Activated CD4-positive, alpha-beta T cell treated with anti-CD3 and anti-CD28 coated beads for 36 hours (primary cell): ENCODE measurements at regions of chr19 and their contacts with region 1.

Region 1: DNA sequence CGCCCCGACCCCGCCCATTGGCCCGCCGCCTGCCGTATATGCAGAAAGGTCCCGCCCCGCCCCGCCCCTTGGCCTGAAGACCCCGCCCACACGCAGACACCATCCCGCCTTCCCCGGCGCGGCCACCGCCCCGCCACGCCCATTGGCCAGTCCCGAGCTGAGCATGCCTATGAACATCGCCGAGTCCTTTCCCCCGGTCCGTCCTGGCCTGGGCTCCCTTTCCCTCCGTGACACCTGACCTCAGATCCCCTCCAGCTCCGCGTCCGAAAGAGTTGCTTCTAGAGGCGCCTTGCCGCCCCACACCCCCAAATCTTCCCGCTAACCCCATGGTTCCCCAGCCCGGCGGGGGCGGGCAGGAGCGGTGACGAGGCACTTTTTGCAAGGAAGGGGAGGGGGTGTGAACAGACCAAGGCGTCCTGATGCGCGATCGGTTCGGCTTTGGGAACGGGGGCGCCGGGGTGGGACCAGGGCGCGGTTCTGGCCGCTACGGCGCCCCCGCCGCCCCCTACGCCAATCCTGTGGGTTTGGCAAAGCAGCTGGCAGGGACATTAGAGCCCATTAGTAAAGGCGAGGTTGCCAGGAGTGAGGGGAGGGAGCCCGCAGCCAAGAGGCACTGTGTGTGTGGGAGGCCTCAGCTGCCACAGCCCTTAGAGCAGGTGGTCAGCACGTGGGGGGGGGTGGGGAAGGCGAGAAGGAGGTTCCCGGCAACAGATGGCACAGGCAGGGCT is 406 bp upstream of the NUMBL start:
- DNase-seq: peak; percentile 97
- ATAC-seq: peak; percentile 85
- H3K4me3 Mint-ChIP-seq: peak overlapping the region; percentile 80
- H3K27ac Mint-ChIP-seq: peak overlapping the region; percentile 87
- H3K4me1 Mint-ChIP-seq: peaks cover 5% of the 10 kb centered on the region
- H3K27me3 Mint-ChIP-seq: no peaks in the 10 kb centered on the region

Region 2: DNA sequence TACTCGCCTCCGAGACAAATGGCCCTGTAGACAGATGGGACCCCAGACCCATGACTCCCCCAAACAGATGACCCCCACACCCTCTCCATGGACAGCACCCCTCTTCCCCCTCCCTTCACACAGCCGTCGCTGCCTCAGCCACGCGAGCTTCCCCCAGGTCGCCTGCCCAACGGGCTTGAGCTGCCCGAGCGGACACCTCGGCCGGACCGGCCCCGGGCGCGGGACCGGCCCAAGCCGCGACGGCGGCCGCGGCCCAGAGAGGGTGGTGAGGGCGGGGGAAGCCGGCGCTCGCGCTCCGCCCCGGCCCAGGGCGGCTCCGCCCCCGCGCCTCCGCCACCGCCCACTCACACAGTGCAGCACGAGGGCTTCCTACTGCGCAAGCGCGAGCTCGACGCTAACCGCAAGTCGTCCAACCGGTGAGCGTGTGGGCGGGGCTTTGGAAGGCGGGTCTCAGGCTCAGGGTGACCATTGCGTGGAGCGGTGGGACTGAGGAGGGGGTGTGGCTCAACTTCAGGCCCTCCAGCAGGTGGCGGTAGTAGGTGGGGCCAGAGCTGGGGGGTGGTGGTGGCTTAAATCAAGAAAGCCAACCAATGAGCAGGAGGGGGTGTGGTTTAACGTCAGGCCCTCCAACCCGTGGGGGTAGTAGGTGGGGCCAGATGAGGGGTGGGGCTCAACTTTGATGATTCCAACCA is 120.4 kb before region 1 on chr19:
- CTCF ChIA-PET with region 1: no interaction called
- POLR2A ChIA-PET with region 1: no interaction called
- intact Hi-C with region 1: loop called in 1 of 2 experiments (anchors 1 kb)
- DNase-seq: peak; percentile 97
- ATAC-seq: peak; percentile 94
- H3K4me3 Mint-ChIP-seq: peak overlapping the region; percentile 50
- H3K27ac Mint-ChIP-seq: peak overlapping the region; percentile 7
- H3K4me1 Mint-ChIP-seq: peaks cover 12% of the 10 kb centered on the region
- H3K27me3 Mint-ChIP-seq: peaks cover 19% of the 10 kb centered on the region

Region 3: DNA sequence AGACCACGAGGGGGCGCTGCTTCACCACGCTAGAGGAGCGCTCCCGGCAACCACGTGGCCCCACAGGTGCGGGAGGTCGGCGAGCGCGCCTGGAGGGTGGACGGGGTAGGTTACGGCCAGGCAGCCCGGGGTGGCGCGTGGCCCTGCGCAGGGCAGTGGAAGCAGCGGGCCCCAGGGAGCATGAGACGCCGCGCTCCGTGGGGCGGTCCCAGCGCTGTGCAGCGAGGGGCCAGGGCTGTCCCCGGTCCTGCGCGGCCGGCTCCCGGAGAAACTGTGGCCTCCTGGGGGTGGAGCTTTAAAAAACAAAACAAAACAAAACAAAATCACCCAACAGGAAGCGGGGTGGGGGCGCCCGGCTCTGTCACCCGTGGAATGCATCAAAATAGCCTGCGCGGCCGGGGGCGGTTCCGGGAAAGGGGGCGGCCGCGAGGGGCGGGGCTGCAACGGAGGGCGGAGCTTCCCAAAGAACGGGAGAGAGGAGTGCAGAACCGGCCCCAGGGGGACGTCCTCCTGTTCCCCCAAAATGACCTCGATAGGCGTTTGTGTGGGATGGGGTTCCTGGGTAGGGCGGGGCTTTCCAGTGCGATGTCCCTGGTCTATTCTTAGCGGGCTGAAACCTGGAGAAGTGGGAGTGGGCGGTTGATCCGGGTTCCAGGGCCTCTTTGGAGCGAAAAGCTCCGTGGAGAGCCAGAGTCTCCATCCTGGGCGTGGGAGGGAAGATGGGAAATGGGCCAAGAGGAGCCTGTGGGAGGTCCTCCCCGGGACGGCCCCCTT is 27.7 kb before region 1 on chr19:
- CTCF ChIA-PET with region 1: no interaction called
- POLR2A ChIA-PET with region 1: no interaction called
- intact Hi-C with region 1: loop called (anchors 1 to 2 kb)
- DNase-seq: peak; percentile 96
- ATAC-seq: peak; percentile 81
- H3K4me3 Mint-ChIP-seq: peak overlapping the region; percentile 66
- H3K27ac Mint-ChIP-seq: peak overlapping the region; percentile 77
- H3K4me1 Mint-ChIP-seq: peaks cover 19% of the 10 kb centered on the region
- H3K27me3 Mint-ChIP-seq: no peaks in the 10 kb centered on the region

Region 4: GRCh38 chr19:40798223-40798996 is 107.6 kb after region 1 on chr19:
- CTCF ChIA-PET with region 1: no interaction called
- POLR2A ChIA-PET with region 1: interaction called, 3 read pairs
- intact Hi-C with region 1: loop called (anchors 1 kb)
- DNase-seq: peak; percentile 100
- ATAC-seq: peak; percentile 82
- H3K4me3 Mint-ChIP-seq: peak overlapping the region; percentile 91
- H3K27ac Mint-ChIP-seq: peak overlapping the region; percentile 97
- H3K4me1 Mint-ChIP-seq: peaks cover 49% of the 10 kb centered on the region
- H3K27me3 Mint-ChIP-seq: no peaks in the 10 kb centered on the region

Region 5: GRCh38 chr19:40872209-40872608 is 181.4 kb after region 1 on chr19:
- CTCF ChIA-PET with region 1: no interaction called
- POLR2A ChIA-PET with region 1: no interaction called
- intact Hi-C with region 1: loop called in 1 of 2 experiments (anchors 1 kb)
- DNase-seq: no peak
- ATAC-seq: no peak
- H3K4me3 Mint-ChIP-seq: no peak overlapping the region
- H3K27ac Mint-ChIP-seq: no peak overlapping the region
- H3K4me1 Mint-ChIP-seq: peaks cover 9% of the 10 kb centered on the region
- H3K27me3 Mint-ChIP-seq: peaks cover 14% of the 10 kb centered on the region